ENCODE measurements at regions of chr1 and their contacts with region 1.

Region 1: GRCh38 chr1:10430216-10431069 is at the start of gene CENPS:
- DNase-seq: peak; percentile 88
- H3K4me3 Mint-ChIP-seq: peak within 1 kb of the TSS; percentile 89
- H3K27ac Mint-ChIP-seq: peak within 1 kb of the TSS; percentile 87
- H3K4me1 Mint-ChIP-seq: peaks cover 10% of the 10 kb centered on the region
- H3K27me3 Mint-ChIP-seq: no peaks in the 10 kb centered on the region
- CTCF ChIP-seq: peak; percentile 98
- total RNA-seq, gene CENPS: 19.0 and 19.4 TPM in 2 replicates

Region 2: GRCh38 chr1:9942939-9943788 is 487.3 kb before region 1 on chr1 and contains the starts of genes LZIC and NMNAT1:
- CTCF ChIA-PET with region 1: no interaction called
- POLR2A ChIA-PET with region 1: interaction called, 3 read pairs
- intact Hi-C with region 1: loop called (anchors 2 kb)
- DNase-seq: peak; percentile 93
- H3K4me3 Mint-ChIP-seq: peak within 1 kb of the TSS; percentile 98
- H3K27ac Mint-ChIP-seq: peak within 1 kb of the TSS; percentile 99
- H3K4me1 Mint-ChIP-seq: peaks cover 13% of the 10 kb centered on the region
- H3K27me3 Mint-ChIP-seq: no peaks in the 10 kb centered on the region
- CTCF ChIP-seq: no peak
- total RNA-seq, gene LZIC: 37.2 and 42.6 TPM in 2 replicates
- total RNA-seq, gene NMNAT1: 10.4 and 14.0 TPM in 2 replicates

Region 3: DNA sequence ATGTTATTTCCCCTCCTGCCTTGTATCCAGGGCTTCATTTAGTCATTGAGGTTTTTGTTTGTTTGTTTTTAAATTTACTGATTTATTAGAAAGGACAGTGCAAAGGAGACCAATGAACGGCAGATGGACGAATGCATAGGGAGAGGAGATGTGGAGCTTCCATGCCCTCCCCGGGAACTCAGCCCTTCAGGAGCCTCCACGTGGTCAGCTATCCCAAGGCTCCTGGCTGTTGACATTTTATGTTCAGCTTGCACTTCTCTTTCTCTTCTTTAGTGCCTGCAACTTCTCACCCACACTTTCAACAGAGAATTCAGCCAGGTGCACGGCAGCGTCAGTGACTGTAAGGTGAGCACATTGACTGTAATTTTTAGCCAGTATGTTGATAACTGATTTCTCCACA is 62.2 kb before region 1 on chr1:
- CTCF ChIA-PET with region 1: interaction called, 13 read pairs
- POLR2A ChIA-PET with region 1: no interaction called
- intact Hi-C with region 1: no loop called
- DNase-seq: no peak
- H3K4me3 Mint-ChIP-seq: no peak overlapping the region
- H3K27ac Mint-ChIP-seq: no peak overlapping the region
- H3K4me1 Mint-ChIP-seq: no peaks in the 10 kb centered on the region
- H3K27me3 Mint-ChIP-seq: no peaks in the 10 kb centered on the region
- CTCF ChIP-seq: no peak

Region 4: GRCh38 chr1:10398734-10399623 is 31.5 kb before region 1 on chr1 and contains the start of gene PGD:
- CTCF ChIA-PET with region 1: interaction called, 3 read pairs
- POLR2A ChIA-PET with region 1: interaction called, 17 read pairs
- intact Hi-C with region 1: no loop called
- DNase-seq: peak; percentile 99
- H3K4me3 Mint-ChIP-seq: peak within 1 kb of the TSS; percentile 93
- H3K27ac Mint-ChIP-seq: peak within 1 kb of the TSS; percentile 44
- H3K4me1 Mint-ChIP-seq: peaks cover 10% of the 10 kb centered on the region
- H3K27me3 Mint-ChIP-seq: no peaks in the 10 kb centered on the region
- CTCF ChIP-seq: no peak
- total RNA-seq, gene PGD: 56.4 and 70.6 TPM in 2 replicates

Region 5: GRCh38 chr1:10530281-10530740 is 99.9 kb after region 1 on chr1:
- CTCF ChIA-PET with region 1: no interaction called
- POLR2A ChIA-PET with region 1: no interaction called
- intact Hi-C with region 1: no loop called
- DNase-seq: peak; percentile 74
- H3K4me3 Mint-ChIP-seq: peak overlapping the region; percentile 44
- H3K27ac Mint-ChIP-seq: peak overlapping the region; percentile 37
- H3K4me1 Mint-ChIP-seq: peaks cover 32% of the 10 kb centered on the region
- H3K27me3 Mint-ChIP-seq: no peaks in the 10 kb centered on the region
- CTCF ChIP-seq: peak; percentile 89